ENCODE measurements at regions of chr12 and their contacts with region 1.

Region 1: GRCh38 chr12:57836442-57837375 is 9.8 kb downstream of the CTDSP2 start:
- DNase-seq: peak; percentile 65 to 90 (median 75)
- H3K4me3 ChIP-seq: peak overlapping the region in 1 of 4 donors; percentile 2
- H3K27ac ChIP-seq: peak overlapping the region; percentile 14 to 99 (median 34)
- H3K4me1 ChIP-seq: peaks cover 94 to 100% of the 10 kb centered on the region in 2 donors
- H3K27me3 ChIP-seq: no peaks in the 10 kb centered on the region
- CTCF ChIP-seq: no peak
- POLR2A ChIP-seq: no peak

Region 2: DNA sequence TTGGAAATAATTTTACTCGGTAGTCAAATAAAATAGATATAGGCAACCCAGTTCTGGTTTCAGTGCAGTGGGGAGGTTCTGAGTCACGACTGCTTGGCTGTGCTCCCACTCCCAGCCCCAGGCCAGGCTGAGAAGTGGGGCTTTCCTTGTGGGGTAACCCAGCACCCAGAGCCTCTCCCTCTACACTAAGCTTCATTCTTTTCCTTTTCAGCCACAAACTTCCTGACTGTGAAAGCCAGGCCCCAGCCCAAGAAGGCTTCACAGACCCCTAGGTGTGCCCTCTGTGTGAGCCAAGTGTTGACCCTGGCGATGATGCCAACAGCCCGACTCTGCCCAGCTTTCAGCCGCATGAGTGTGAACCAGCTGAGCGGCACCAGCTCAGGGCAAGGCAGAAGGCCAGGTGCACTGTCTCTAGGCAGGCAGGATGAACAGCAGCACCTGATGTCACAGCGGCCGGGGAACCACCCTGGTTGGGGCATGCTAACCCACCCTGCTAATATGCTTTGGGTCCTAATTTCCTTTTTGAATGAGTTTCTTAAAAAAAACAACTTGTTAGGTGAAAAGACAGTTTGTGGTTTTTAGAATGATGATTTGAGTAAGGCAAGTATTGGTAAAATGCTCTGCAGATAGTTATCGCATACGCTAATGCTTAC is 62.4 kb after region 1 on chr12:
- intact Hi-C with region 1: loop called (anchors 5 kb)
- DNase-seq: peak; percentile 74 to 87 (median 84)
- H3K4me3 ChIP-seq: no peak overlapping the region
- H3K27ac ChIP-seq: peak overlapping the region; percentile 57 to 98 (median 77)
- H3K4me1 ChIP-seq: peaks cover 40 to 51% of the 10 kb centered on the region in 2 donors
- H3K27me3 ChIP-seq: no peaks in the 10 kb centered on the region
- CTCF ChIP-seq: no peak
- POLR2A ChIP-seq: peak in 1 of 2 donors; percentile 38

Region 3: GRCh38 chr12:57904848-57905811 is 68.4 kb after region 1 on chr12:
- intact Hi-C with region 1: loop called in 1 of 2 experiments (anchors 5 kb)
- DNase-seq: peak; percentile 84 to 96 (median 90)
- H3K4me3 ChIP-seq: peak overlapping the region in 1 of 4 donors; percentile 45
- H3K27ac ChIP-seq: no peak overlapping the region
- H3K4me1 ChIP-seq: peaks cover 0 to 9% of the 10 kb centered on the region in 2 donors
- H3K27me3 ChIP-seq: no peaks in the 10 kb centered on the region
- CTCF ChIP-seq: peak; percentile 98 to 100 (median 100)
- POLR2A ChIP-seq: no peak